WTC11 (cell line): ENCODE measurements at regions of chr11 and their contacts with region 1.

Region 1: DNA sequence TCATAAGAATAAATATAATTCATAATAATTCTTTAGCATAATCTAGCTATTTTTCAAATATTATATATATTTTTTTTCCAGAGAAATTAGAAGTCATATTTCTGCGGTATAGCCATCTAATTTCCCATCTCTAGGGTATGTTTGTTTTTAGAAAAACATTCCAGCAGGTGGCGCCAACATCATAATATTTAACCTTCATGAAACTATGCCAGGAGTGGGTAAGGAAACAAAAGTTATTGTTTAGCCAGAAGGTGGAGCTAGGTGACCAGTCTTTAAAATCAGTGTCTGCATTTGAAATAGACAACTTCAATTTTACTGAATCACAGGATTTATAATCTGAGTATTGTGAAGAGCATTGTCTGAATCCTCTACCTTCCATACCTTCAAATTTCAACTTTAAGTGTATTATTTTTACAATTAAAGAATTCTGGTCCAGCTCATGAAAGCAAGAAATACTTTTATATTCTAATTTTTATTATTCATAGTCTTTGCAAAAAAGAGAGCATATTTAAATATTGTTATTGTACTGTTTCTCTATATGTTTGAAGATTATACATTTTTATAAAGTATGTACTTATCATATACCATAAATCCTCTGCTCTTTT is 15.7 kb upstream of the CCDC179 start:
- DNase-seq: peak; percentile 44
- ATAC-seq: peak; percentile 83
- H3K4me3 Mint-ChIP-seq: no peak overlapping the region
- H3K27ac Mint-ChIP-seq: no peak overlapping the region
- H3K4me1 Mint-ChIP-seq: 0 out of 2 replicates have a peak, but pooled peaks cover 4% of the 10 kb centered on the region
- H3K27me3 Mint-ChIP-seq: no peaks in the 10 kb centered on the region; the same call in 1 of the 2 replicates
- CTCF ChIP-seq: peak; percentile 53

Region 2: DNA sequence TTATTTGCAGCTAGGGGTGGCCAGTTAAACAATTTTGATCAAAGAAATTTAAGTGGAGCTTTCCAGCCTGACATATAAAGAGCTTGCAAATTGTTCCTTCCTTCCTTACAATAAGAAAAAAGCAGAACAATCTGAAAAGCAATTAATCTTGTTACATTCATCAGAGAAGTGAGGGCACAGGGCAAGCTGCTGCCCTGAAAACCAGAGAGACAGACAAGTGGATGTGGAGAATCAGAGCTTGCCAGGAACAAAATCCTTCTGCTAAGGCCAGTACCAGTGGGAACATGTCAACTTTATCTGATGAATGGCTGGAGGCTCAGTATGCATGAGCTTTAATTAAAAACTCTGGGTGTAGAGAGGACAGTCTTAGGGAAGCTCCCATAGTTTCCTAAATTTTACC is 24.5 kb before region 1 on chr11:
- CTCF ChIA-PET with region 1: no interaction called
- POLR2A ChIA-PET with region 1: no interaction called
- DNase-seq: no peak
- ATAC-seq: no peak
- H3K4me3 Mint-ChIP-seq: no peak overlapping the region
- H3K27ac Mint-ChIP-seq: no peak overlapping the region
- H3K4me1 Mint-ChIP-seq: no peaks in the 10 kb centered on the region
- H3K27me3 Mint-ChIP-seq: no peaks in the 10 kb centered on the region; the same call in 1 of the 2 replicates
- CTCF ChIP-seq: no peak

Region 3: GRCh38 chr11:23021287-23021863 is 145.4 kb after region 1 on chr11:
- CTCF ChIA-PET with region 1: interaction called, 10 read pairs
- POLR2A ChIA-PET with region 1: no interaction called
- DNase-seq: peak; percentile 35
- ATAC-seq: peak; percentile 89
- H3K4me3 Mint-ChIP-seq: no peak overlapping the region
- H3K27ac Mint-ChIP-seq: no peak overlapping the region
- H3K4me1 Mint-ChIP-seq: 0 out of 2 replicates have a peak, but pooled peaks cover 9% of the 10 kb centered on the region
- H3K27me3 Mint-ChIP-seq: no peaks in the 10 kb centered on the region
- CTCF ChIP-seq: peak; percentile 68

Region 4: DNA sequence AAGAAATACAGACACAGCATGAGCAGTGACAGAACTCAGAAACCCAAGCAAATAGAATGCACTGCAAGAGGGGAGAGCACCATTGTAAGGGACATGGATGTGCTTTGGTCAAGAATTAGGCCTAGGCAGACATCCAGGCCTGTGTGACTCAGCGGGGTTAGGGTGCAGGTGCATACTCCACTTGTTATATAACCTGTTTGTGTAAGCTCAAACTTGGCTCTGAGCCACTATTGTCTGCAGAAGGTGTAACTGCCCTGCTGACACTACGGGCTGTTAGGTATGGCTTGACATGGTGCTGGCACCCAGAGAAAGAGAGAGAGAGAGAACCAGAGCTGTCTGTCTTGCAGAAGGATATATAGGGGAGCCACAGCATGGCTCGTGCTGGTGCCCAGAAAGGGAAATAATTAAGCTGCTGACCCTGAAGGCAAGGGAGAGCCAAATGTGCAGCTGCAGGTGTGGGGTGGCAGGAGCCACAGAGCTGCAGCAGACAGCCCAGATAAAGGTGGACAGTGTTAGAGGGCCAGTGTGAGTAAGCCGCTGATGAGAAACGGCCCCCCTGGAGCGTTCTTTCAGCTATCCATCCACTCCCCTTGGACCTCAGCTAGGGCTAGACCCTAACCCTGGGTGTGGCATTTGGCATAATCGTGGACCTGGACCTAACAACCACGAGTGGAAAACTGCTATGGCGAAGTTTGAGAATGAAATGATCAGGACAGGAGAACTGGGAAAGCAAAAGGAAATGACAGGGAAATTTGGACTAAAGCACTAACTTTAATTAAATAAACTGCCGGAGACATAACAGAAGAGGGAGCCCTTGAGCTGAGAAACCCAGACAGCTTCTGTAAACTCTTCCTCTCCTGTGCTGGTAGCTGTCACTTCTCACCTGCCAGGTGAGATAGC is 237.3 kb after region 1 on chr11:
- CTCF ChIA-PET with region 1: interaction called, 20 read pairs
- POLR2A ChIA-PET with region 1: no interaction called
- DNase-seq: peak; percentile 21
- ATAC-seq: peak; percentile 87
- H3K4me3 Mint-ChIP-seq: no peak overlapping the region
- H3K27ac Mint-ChIP-seq: no peak overlapping the region; the same call in 1 of the 2 replicates
- H3K4me1 Mint-ChIP-seq: peaks cover 26% of the 10 kb centered on the region
- H3K27me3 Mint-ChIP-seq: no peaks in the 10 kb centered on the region; the same call in 1 of the 2 replicates
- CTCF ChIP-seq: peak; percentile 52